OCI-LY7 (cell line): ENCODE measurements at regions of chrX and their contacts with region 1.

Region 1: GRCh38 chrX:133670383-133670782 is 255.1 kb upstream of the GPC4 start:
- DNase-seq: peak; percentile 12
- H3K4me3 ChIP-seq: no peak overlapping the region
- H3K27ac ChIP-seq: no peak overlapping the region
- H3K4me1 ChIP-seq: no peaks in the 10 kb centered on the region
- CTCF ChIP-seq: peak; percentile 82

Region 2: DNA sequence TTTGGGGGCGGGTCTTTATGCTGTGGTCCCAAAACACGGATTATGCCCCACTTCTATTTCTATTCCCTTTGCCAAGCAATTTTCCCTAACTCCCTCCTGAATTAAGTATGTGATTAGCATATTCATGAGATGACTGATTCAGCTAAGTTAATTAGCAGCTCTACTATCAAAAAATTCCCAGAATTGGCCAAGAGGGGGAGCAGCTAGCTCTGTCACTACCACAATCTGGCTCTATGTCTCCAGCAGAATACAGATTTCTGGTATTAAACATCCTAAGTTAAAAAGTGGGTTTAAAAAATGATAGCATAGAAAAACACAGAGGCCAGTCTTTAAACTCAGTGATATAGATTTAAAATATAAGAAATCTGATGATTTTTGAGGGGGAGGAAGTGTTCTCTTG is 335.4 kb before region 1 on chrX:
- CTCF ChIA-PET with region 1: no interaction called
- POLR2A ChIA-PET with region 1: no interaction called
- intact Hi-C with region 1: loop called (anchors 2 kb)
- DNase-seq: peak; percentile 20
- H3K4me3 ChIP-seq: no peak overlapping the region
- H3K27ac ChIP-seq: no peak overlapping the region
- H3K4me1 ChIP-seq: no peaks in the 10 kb centered on the region
- CTCF ChIP-seq: peak; percentile 70

Region 3: GRCh38 chrX:133726211-133726641 is 55.8 kb after region 1 on chrX:
- CTCF ChIA-PET with region 1: no interaction called
- POLR2A ChIA-PET with region 1: no interaction called
- intact Hi-C with region 1: no loop called
- DNase-seq: no peak
- H3K4me3 ChIP-seq: no peak overlapping the region
- H3K27ac ChIP-seq: no peak overlapping the region
- H3K4me1 ChIP-seq: no peaks in the 10 kb centered on the region
- CTCF ChIP-seq: no peak